ENCODE measurements at regions of chr20 and their contacts with region 1.

Region 1: DNA sequence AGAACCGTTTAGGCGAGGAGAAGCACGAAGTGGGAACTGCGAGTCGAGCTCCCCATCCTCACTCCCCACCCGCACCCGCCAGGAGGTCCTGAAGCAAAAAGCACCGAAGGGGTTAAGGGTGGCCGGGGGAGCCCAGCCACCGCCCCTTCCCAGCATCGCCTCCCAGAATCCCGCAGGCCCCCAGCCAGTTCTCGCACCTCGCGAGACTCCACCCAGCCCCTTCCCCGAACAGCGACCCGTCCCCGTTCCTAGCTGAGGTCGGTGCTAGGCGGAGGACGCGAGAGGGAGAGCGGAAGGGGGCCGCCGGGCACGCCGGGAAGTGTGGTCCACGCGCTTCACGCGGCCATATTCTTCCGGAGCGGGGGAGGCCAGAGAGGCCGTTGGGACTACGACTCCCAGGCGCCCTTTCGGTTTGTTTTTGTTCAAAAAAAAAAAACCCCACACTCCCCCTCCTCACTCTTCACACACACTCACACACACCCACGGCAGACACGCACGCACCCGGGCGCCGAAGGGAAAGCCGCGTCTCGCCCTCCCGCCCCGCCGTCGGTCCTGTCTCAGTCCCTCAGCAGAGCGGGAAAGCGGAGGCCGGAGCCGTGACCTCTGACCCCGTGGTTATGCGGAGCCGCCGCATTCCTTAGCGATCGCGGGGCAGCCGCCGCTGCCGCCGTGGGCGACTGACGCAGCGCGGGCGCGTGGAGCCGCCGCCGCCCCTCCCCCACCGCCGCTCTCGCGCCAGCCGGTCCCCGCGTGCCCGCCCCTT is at the start of gene ASXL1:
- DNase-seq: peak; percentile 98
- ATAC-seq: peak; percentile 82
- H3K4me3 Mint-ChIP-seq: peak within 1 kb of the TSS; percentile 99
- H3K27ac Mint-ChIP-seq: peak within 1 kb of the TSS; percentile 100
- H3K4me1 Mint-ChIP-seq: peaks cover 68% of the 10 kb centered on the region
- H3K27me3 Mint-ChIP-seq: no peaks in the 10 kb centered on the region
- total RNA-seq, gene ASXL1: 129 to 141 TPM

Region 2: GRCh38 chr20:31879143-31879987 is 478.7 kb before region 1 on chr20:
- CTCF ChIA-PET with region 1: no interaction called
- POLR2A ChIA-PET with region 1: no interaction called
- intact Hi-C with region 1: loop called in 1 of 2 experiments (anchors 2 kb)
- DNase-seq: peak; percentile 90
- ATAC-seq: peak; percentile 94
- H3K4me3 Mint-ChIP-seq: peak overlapping the region; percentile 84
- H3K27ac Mint-ChIP-seq: peak overlapping the region; percentile 45
- H3K4me1 Mint-ChIP-seq: peaks cover 8% of the 10 kb centered on the region
- H3K27me3 Mint-ChIP-seq: no peaks in the 10 kb centered on the region

Region 3: DNA sequence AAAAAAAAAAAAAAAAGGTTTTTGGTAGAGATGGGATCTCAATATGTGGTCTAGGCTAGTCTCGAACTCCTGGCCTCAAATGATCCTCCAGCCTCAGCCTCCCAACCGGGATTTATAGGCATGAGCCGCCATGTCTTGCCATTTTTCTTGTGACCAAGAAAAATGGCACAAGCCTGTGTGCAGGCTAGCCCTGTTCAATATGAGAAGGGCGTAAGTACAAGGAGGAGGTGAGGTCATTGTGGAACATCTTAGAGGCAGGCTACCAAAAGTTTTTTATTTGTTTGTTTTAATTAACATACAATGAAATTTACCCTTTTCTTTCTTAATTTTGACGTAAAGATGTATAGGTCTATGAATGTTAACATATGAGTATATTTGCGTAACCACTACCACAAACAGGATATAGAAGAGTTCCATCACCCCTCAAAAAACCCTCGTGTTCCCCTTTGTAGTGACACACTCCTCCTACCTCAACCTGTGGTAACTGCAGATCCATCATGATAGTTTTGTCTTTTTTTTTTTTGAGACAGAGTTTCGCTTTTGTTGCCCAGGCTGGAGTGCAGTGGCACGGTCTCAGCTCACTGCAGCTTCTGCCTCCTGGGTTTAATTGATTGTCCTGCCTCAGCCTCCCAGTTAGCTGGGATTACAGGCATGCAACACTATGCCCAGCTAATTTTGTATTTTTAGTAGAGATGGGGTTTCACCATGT is 108.9 kb before region 1 on chr20:
- CTCF ChIA-PET with region 1: no interaction called
- POLR2A ChIA-PET with region 1: no interaction called
- intact Hi-C with region 1: loop called (anchors 1 to 2 kb)
- DNase-seq: peak; percentile 60
- ATAC-seq: peak; percentile 67
- H3K4me3 Mint-ChIP-seq: peak overlapping the region; percentile 28
- H3K27ac Mint-ChIP-seq: peak overlapping the region; percentile 84
- H3K4me1 Mint-ChIP-seq: peaks cover 75% of the 10 kb centered on the region
- H3K27me3 Mint-ChIP-seq: no peaks in the 10 kb centered on the region

Region 4: DNA sequence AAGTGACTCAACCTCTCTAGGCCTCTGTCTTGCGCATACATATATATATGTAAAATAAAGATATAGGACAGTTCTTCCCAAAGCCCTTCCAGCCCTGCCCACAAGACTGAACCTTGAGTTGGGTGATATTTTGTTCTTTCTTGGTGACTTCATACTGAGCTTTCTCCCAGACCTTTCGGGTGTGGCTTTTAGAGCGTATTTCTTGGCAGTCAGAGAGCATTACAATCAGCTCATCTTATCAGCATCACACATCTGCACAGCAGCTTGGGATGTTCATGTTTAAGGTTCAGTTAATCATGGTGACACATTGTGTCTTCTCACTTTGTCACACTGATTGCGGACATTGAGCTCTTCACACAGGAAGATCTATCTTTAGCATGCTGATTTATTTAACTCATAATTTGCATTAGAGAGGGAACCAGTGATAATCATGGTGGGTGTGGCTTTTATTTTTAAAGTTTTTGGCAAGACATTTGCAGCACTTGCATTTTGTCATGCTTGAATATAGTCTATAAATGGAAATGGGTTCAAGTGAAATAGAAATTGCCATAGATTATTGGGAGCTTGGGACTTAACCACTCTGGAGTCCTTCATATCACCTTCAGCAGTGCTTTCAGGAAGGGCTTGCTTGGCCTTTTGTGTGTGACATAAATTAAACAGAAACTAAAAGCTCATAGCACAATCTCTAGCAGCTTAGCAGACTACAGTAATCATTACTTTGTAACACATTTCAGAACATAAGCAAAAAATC is 72.3 kb before region 1 on chr20:
- CTCF ChIA-PET with region 1: interaction called, 4 read pairs
- POLR2A ChIA-PET with region 1: interaction called, 7 read pairs
- intact Hi-C with region 1: loop called (anchors 1 kb)
- DNase-seq: peak; percentile 70
- ATAC-seq: peak; percentile 83
- H3K4me3 Mint-ChIP-seq: peak overlapping the region; percentile 58
- H3K27ac Mint-ChIP-seq: peak overlapping the region; percentile 97
- H3K4me1 Mint-ChIP-seq: peaks cover 88% of the 10 kb centered on the region
- H3K27me3 Mint-ChIP-seq: no peaks in the 10 kb centered on the region

Region 5: DNA sequence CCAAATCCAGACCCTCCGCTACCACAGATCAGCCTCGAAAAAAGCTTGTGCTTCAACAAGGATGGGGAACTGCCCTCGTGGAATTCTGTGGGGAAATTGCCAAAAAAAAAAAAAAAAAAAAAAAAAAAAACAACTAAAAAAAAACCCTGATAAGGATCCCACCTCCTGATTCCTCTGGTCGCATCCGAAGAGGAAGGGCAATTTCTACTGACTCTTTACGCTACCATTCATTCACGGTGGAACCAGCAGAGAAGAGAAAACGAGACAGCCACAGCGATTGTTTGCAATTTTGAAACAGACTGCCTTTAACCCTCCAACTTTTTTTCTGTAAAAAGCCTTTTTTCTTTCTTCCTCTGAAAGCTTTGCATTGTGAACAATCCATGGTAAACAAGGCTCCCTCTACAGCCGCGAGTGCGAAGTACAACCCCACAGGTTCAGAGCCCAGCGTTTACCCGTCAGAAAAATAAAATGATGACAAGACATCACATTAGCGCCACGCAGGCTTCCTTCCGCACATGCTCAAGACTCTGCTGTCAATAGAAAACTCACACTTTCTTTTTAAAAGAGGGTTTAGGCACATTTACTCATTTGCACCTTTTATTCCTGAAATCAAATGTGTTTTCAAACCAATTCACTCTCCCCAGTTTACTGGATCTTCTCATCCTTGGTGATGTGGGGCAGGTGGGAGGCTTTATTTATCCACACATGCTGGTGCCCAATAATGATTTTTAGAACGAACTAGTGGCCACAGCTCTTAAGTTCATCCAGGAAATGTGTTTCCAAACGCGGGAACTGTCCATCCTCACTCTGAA is 127.1 kb after region 1 on chr20:
- CTCF ChIA-PET with region 1: interaction called, 3 read pairs
- POLR2A ChIA-PET with region 1: no interaction called
- intact Hi-C with region 1: loop called (anchors 1 kb)
- DNase-seq: peak; percentile 90
- ATAC-seq: peak; percentile 85
- H3K4me3 Mint-ChIP-seq: peak overlapping the region; percentile 80
- H3K27ac Mint-ChIP-seq: peak overlapping the region; percentile 91
- H3K4me1 Mint-ChIP-seq: peaks cover 34% of the 10 kb centered on the region
- H3K27me3 Mint-ChIP-seq: no peaks in the 10 kb centered on the region

Region 6: GRCh38 chr20:32819992-32820710 is 462.1 kb after region 1 on chr20:
- CTCF ChIA-PET with region 1: no interaction called
- POLR2A ChIA-PET with region 1: interaction called, 4 read pairs
- intact Hi-C with region 1: loop called in 1 of 2 experiments (anchors 2 kb)
- DNase-seq: peak; percentile 85
- ATAC-seq: peak; percentile 76
- H3K4me3 Mint-ChIP-seq: peak overlapping the region; percentile 87
- H3K27ac Mint-ChIP-seq: peak overlapping the region; percentile 92
- H3K4me1 Mint-ChIP-seq: peaks cover 37% of the 10 kb centered on the region
- H3K27me3 Mint-ChIP-seq: no peaks in the 10 kb centered on the region